ENCODE measurements at regions of chr22 and their contacts with region 1.

Region 1: DNA sequence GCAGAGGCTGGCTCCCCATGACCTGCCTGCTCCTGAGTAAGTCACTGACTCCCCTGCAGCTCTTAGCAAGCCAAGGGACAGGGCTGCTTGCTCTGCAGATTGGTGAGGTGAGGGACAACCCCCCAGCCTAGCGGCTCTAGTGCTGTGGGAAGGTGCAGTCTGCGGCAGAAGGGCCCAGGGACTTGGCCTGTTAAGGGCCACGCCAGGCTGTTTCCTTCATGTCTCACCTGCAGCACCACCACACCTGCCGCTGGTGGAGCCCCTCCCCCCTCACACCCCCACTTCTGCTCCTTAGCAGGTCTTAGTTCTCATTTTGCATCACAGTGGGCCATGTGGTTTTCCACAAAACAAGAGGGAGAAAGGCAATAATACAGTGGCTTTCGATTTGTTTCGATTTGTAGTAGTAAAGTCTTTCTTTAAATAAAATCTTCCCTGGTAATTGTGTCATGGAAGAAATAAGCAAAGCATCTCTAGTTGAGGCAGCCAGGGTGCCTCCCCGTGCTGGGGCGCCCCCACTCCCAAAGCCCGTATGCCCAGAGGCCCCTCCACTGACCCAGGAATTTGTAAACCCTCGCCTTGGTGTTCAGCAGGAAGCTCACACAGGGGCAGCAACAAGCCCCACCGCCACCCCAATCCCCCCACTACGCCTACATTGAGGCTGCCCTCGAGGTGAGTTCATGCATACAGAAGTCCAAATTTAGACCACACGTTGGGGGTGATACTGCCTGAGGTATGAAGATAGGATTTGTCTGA is 86.5 kb upstream of the CLDN5 start:
- DNase-seq: peak; percentile 63
- H3K4me3 Mint-ChIP-seq: peak overlapping the region; percentile 26
- H3K27ac Mint-ChIP-seq: peak overlapping the region; percentile 84
- H3K4me1 Mint-ChIP-seq: peaks cover 39% of the 10 kb centered on the region
- H3K27me3 Mint-ChIP-seq: peaks cover 1% of the 10 kb centered on the region

Region 2: GRCh38 chr22:19576460-19577421 is 33.9 kb before region 1 on chr22:
- intact Hi-C with region 1: loop called (anchors 1 kb)
- DNase-seq: peak; percentile 87
- H3K4me3 Mint-ChIP-seq: peak overlapping the region; percentile 70
- H3K27ac Mint-ChIP-seq: peak overlapping the region; percentile 94
- H3K4me1 Mint-ChIP-seq: peaks cover 46% of the 10 kb centered on the region
- H3K27me3 Mint-ChIP-seq: no peaks in the 10 kb centered on the region